HCT116 (cell line): ENCODE measurements at regions of chr16 and their contacts with region 1.

Region 1: DNA sequence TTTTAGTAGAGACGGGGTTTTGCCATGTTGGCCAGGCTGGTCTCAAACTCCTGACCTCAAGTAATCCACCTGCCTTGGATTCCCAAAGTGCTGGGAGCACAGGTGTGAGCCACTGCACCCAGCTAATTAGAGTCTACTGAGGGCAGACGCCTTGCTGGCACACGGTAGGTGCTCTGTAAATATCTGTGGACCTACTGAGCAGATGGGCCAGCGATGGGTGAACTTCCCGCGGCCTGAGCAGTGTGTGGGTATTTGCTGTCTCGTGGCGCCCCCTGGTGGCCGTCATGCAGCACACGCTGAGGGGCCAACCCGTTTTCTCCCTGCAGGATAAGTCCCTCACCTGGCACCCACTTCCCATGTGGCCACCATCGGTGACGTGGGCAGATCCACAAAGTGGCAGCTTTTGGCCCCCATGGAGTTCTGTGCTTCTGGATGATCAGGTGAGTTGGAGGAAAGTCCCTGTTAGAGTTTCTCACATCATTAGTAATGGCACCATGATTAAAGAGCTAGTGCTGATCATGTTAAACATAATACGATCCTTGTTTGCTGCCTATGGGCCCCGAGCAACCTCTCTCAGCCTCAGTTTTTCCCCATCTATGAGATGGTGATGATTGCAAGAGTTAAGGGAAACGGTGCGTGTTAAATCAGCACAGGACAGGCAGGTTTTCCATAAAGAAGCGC is 40.7 kb downstream of the ZDHHC7 start:
- DNase-seq: peak; percentile 77
- ATAC-seq: peak; percentile 99
- H3K4me3 ChIP-seq: no peak overlapping the region
- H3K27ac ChIP-seq: no peak overlapping the region
- H3K4me1 ChIP-seq: peaks cover 0 to 16% of the 10 kb centered on the region in 2 experiments; a peak in 2 of 4 replicates
- H3K27me3 ChIP-seq: no peaks in the 10 kb centered on the region
- CTCF ChIP-seq: peak; percentile 95 to 99 (median 98)
- POLR2A ChIP-seq: no peak
- RAD21 ChIP-seq: peak; percentile 100

Region 2: DNA sequence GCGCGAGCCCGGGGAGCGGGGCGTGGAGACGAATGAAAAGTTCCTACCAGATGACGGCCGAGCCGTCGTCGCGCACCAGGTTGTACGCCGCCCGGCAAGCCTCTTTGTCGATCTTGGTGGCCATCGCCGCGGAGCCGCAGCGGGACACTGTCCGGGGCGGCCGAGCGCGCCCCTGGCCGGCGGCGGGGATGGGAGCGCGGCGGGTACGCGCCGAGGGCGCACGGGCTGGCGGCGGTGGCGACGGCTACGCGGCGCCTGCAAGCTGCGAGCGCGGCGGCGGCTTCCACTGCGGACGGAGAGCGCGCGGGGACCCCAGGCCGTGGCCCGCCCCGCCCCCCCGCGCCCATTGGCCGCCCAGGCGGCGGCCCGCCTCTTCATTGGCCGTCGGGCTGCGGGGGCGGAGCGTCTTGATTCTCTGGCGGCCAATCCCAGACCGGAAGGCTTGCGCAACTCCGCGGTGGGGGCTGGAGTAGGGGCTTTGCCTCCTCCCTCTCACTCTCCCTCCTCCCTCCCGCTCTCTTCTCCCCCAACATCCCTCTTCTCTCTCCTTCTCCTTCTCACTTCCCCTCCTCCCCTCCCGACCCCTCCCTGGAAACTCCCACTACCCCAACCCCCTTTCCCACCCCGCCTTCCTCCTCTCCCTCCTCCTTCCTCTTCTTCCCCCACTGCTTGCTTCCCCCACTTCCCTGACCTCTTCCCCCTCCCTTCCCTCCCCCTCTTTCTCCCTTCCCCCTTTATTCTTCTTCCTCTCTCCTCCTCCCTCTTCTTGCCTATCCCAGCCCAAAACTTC is 352.6 kb before region 1 on chr16 and contains the start of gene COTL1:
- CTCF ChIA-PET with region 1: interaction called, 12 read pairs
- POLR2A ChIA-PET with region 1: no interaction called
- RAD21 ChIA-PET with region 1: interaction called in 1 of 2 experiments, 3 read pairs
- intact Hi-C with region 1: loop called (anchors 1 kb)
- DNase-seq: peak; percentile 96
- ATAC-seq: peak; percentile 76
- H3K4me3 ChIP-seq: peak within 1 kb of the TSS; percentile 82 to 85
- H3K27ac ChIP-seq: peak within 1 kb of the TSS; percentile 86
- H3K4me1 ChIP-seq: peaks cover 18 to 64% of the 10 kb centered on the region in 2 experiments
- H3K27me3 ChIP-seq: no peaks in the 10 kb centered on the region
- CTCF ChIP-seq: no peak
- POLR2A ChIP-seq: peak; percentile 85
- RAD21 ChIP-seq: no peak
- total RNA-seq, gene COTL1: 276 TPM

Region 3: DNA sequence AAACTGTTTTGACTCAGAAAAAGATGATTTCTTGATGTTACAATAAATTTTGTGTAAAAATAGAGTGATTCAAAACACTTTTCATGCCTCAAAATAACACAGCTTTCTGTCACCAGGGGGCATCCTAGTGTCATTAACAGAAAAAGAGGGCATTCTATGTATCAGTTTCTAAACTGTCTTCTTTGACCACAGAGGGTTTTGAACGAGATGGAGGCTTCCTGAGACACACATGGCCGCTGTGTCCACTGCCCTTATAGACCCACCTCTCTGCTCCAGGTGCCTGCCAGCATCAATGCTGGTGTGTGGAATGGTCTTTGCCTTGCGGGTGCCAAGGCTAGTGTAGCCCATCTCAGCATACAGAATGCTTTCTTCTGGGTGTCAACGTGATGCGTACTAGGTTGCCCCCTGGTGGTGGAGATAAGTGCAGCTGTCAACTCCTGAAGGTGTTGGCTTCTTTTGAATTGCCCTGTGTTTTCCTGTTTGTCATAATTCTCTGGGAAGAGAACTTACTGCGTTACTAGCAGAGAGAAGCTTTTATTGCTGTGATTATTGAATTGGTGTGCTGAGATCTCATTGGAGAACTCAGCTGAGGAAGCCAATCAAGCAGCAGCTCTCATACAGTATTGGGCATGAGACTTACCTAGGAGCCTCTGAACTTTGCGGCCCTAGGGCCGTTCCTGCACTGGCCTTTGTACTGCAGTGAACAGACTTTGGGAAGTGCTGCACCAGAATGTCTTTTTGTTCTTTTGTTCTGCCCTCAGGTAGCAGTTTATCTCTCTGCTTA is 232.1 kb before region 1 on chr16:
- CTCF ChIA-PET with region 1: interaction called, 20 read pairs
- POLR2A ChIA-PET with region 1: no interaction called
- RAD21 ChIA-PET with region 1: interaction called in 1 of 2 experiments, 3 read pairs
- intact Hi-C with region 1: loop called (anchors 1 kb)
- DNase-seq: peak; percentile 85
- ATAC-seq: peak; percentile 93
- H3K4me3 ChIP-seq: no peak overlapping the region
- H3K27ac ChIP-seq: peak overlapping the region; percentile 9; the same call in 1 of the 2 replicates
- H3K4me1 ChIP-seq: peaks cover 21 to 39% of the 10 kb centered on the region in 2 experiments
- H3K27me3 ChIP-seq: no peaks in the 10 kb centered on the region
- CTCF ChIP-seq: peak; percentile 96 to 99 (median 98)
- POLR2A ChIP-seq: no peak
- RAD21 ChIP-seq: peak; percentile 78

Region 4: DNA sequence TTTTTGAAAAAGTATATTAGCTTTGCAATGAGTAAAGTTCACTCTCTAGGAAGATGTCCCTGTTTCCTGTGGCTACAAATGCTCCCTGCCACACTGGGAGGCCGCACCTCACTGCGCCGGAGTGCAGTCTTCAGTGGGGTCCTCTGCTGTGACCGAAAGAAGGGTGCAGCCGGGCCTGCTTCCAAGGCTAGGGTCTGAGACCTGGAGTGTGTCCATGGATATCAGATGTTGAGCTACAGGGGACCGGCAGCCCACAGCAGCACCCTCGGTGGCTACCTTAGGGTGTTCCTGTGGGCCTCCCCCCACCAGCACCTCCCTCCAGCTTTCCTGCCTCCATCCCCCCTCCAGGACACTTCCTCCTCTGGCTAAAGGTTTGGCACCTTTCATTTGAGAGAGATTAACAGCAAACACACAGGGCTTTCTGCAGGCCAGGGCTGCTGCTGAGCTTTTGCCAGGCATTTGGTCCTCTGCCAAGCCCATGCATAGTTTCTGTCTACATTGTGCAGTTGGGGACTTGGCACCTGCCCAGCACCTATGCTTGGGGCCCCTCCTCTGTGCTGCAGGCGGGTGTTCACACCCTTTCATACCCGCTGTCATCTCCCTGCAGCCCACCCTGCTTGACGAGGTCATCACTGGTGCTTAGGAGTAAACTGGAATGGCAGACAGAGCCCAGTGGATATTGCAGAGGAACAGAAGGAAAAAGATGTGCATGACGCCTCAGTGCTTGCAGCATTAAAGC is 184.6 kb before region 1 on chr16:
- CTCF ChIA-PET with region 1: no interaction called
- POLR2A ChIA-PET with region 1: no interaction called
- RAD21 ChIA-PET with region 1: no interaction called
- intact Hi-C with region 1: no loop called
- DNase-seq: no peak
- ATAC-seq: no peak
- H3K4me3 ChIP-seq: no peak overlapping the region
- H3K27ac ChIP-seq: no peak overlapping the region
- H3K4me1 ChIP-seq: 0 out of 4 replicates have a peak, but pooled peaks cover 0 to 2% of the 10 kb centered on the region in 2 experiments
- H3K27me3 ChIP-seq: no peaks in the 10 kb centered on the region
- CTCF ChIP-seq: no peak
- POLR2A ChIP-seq: no peak
- RAD21 ChIP-seq: no peak

Region 5: DNA sequence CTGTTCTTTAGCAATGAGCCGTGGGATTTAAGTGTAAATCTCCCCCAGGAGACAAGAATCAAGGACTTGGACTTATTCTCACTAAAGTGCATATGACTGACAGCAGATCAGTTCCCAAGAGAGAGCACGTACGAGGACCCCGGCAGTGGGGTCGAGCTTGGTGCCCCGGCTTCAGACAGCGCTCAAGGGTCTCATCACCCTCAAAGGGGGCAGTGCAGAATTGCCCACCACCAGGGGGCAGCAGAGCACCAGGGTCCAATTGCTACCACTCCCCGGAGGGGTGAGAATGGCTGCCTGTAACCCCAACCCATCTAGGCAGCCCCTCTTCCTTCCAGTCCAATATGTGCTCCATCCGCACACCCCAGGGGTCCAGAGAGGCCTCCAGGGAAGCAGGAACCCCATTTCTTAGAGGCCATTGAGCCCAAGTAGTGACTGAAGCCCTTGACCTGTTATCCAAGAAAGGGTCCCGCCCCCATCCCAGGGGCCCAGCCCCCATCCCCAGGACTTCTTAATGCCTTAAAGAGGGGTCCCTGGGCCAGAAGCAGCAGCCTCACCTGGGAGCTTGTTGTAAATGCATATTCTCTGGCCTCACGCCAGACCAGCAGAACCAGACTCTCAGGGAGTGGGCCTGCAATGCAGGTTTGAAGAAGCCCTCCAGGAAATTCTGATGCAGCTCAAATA is 45.4 kb before region 1 on chr16:
- CTCF ChIA-PET with region 1: interaction called, 49 read pairs
- POLR2A ChIA-PET with region 1: no interaction called
- RAD21 ChIA-PET with region 1: interaction called, 4 read pairs
- intact Hi-C with region 1: loop called (anchors 1 kb)
- DNase-seq: peak; percentile 35
- ATAC-seq: peak; percentile 87
- H3K4me3 ChIP-seq: no peak overlapping the region
- H3K27ac ChIP-seq: no peak overlapping the region
- H3K4me1 ChIP-seq: peaks cover 0 to 12% of the 10 kb centered on the region in 2 experiments; a peak in 1 of 4 replicates
- H3K27me3 ChIP-seq: no peaks in the 10 kb centered on the region
- CTCF ChIP-seq: peak; percentile 95 to 100 (median 98)
- POLR2A ChIP-seq: no peak
- RAD21 ChIP-seq: peak; percentile 96

Region 6: GRCh38 chr16:85086347-85087291 is 116.0 kb after region 1 on chr16:
- CTCF ChIA-PET with region 1: interaction called, 10 read pairs
- POLR2A ChIA-PET with region 1: no interaction called
- RAD21 ChIA-PET with region 1: no interaction called
- intact Hi-C with region 1: no loop called
- DNase-seq: peak; percentile 54
- ATAC-seq: peak; percentile 94
- H3K4me3 ChIP-seq: no peak overlapping the region
- H3K27ac ChIP-seq: no peak overlapping the region
- H3K4me1 ChIP-seq: peaks cover 0 to 7% of the 10 kb centered on the region in 2 experiments; a peak in 2 of 4 replicates
- H3K27me3 ChIP-seq: no peaks in the 10 kb centered on the region
- CTCF ChIP-seq: peak; percentile 84 to 88 (median 85)
- POLR2A ChIP-seq: no peak
- RAD21 ChIP-seq: peak; percentile 85